ENCODE measurements at regions of chr1 and their contacts with region 1.

Region 1: GRCh38 chr1:81512252-81513003 is 288.3 kb upstream of the ADGRL2 start:
- DNase-seq: no peak
- H3K4me3 ChIP-seq: no peak overlapping the region
- H3K27ac ChIP-seq: no peak overlapping the region
- H3K4me1 ChIP-seq: no peaks in the 10 kb centered on the region
- H3K27me3 ChIP-seq: no peaks in the 10 kb centered on the region
- CTCF ChIP-seq: no peak

Region 2: GRCh38 chr1:81541256-81541655 is 28.8 kb after region 1 on chr1:
- CTCF ChIA-PET with region 1: interaction called, 12 read pairs
- POLR2A ChIA-PET with region 1: no interaction called
- intact Hi-C with region 1: no loop called
- DNase-seq: no peak
- H3K4me3 ChIP-seq: no peak overlapping the region
- H3K27ac ChIP-seq: no peak overlapping the region
- H3K4me1 ChIP-seq: no peaks in the 10 kb centered on the region
- H3K27me3 ChIP-seq: no peaks in the 10 kb centered on the region
- CTCF ChIP-seq: no peak

Region 3: DNA sequence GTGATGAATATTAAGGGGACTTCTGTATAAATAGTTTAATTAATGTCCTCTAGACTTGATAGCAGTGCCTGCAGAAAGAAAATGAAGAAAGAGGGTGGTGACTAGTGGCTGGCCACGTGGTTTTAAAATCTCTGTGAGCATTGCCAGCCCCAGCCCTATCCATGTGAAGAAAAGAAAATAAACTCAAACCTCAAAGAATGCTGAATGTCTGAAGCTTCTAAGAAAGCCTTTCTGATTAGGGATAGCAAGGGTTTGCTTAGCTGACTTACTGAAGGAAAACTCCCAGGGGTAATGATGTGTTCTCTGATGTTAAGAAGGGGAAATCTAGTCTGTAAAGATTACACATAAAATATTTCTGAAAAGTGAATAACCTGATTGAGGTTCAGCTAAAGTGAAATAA is 320.1 kb after region 1 on chr1:
- CTCF ChIA-PET with region 1: no interaction called
- POLR2A ChIA-PET with region 1: no interaction called
- intact Hi-C with region 1: no loop called
- DNase-seq: no peak
- H3K4me3 ChIP-seq: no peak overlapping the region
- H3K27ac ChIP-seq: no peak overlapping the region
- H3K4me1 ChIP-seq: no peaks in the 10 kb centered on the region
- H3K27me3 ChIP-seq: no peaks in the 10 kb centered on the region
- CTCF ChIP-seq: no peak

Region 4: DNA sequence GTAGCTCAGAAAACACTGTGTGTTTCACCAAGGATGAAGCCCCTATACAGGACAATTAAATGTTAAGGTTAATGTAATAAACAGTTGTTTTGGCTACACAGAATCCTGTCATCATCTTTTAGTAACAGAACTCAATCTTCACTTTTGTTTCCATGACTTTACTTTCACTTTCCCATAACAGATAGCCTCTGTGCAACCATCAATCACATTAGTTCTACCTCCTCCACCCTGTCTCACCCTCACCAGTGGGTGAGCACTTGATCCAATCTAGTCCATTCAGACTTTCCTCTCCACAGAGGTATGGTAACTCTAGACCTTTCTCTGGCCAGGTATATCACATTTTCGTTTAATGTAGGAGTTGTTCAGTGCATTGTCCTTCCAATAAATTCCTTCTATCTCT is 1306.8 kb after region 1 on chr1:
- CTCF ChIA-PET with region 1: no interaction called
- POLR2A ChIA-PET with region 1: no interaction called
- intact Hi-C with region 1: no loop called
- DNase-seq: no peak
- H3K4me3 ChIP-seq: no peak overlapping the region
- H3K27ac ChIP-seq: no peak overlapping the region
- H3K4me1 ChIP-seq: no peaks in the 10 kb centered on the region
- H3K27me3 ChIP-seq: no peaks in the 10 kb centered on the region
- CTCF ChIP-seq: no peak

Measured in PC-9 (cell line).